Mucosa of descending colon (tissue), 3 donors: ENCODE measurements at regions of chr1 and their contacts with region 1.

Region 1: DNA sequence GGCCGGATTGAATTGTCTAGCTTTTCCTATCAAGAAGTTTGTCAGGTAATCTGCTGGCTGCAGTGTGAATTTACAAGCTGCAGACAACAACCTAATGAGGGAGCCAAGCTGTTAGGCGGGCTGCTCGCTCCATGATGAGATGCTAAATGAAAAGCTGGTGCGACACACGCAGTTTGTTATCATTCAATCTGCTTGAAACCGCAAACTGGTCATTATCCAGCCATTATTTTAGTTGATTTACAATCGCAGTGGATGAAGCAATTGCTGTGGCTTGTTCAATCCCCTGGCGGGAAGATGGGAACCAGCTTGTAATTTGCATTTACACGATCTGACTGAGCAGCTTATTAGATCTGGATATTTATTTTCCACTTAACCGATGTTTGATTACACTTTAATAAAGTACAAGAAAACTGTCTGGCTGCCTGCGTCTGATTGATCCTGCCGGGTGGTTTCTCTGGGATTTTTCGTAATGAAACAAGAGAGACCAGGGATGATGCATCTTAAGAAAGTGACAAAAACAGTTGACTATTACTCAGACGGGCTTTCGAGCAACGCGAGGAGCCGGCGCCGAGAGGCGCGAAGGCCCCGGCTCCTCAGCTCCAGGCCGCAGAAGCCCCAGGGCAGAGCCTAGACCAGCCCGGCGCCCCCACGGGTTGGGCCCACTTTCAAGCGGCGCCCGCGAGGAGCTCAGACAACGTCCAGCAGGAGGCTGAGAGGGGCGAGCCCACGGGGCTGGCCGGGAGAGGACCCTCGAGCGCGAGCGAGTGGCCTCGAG is 118.0 kb upstream of the BARHL2 start:
- DNase-seq: no peak
- ATAC-seq: no peak
- H3K4me3 ChIP-seq: no peak overlapping the region
- H3K4me1 ChIP-seq: peaks cover 7% of the 10 kb centered on the region
- CTCF ChIP-seq: no peak

Region 2: GRCh38 chr1:90721210-90722194 is 113.6 kb before region 1 on chr1:
- intact Hi-C with region 1: loop called in 1 of 2 experiments (anchors 10 kb)
- DNase-seq: peak in 2 of 3 donors; percentile 57 to 84
- ATAC-seq: peak; percentile 74
- H3K4me3 ChIP-seq: no peak overlapping the region
- H3K4me1 ChIP-seq: peaks cover 27% of the 10 kb centered on the region
- CTCF ChIP-seq: peak; percentile 53